ENCODE measurements at regions of chr16 and their contacts with region 1.

Region 1: GRCh38 chr16:54286090-54286993 is at the start of gene IRX3:
- DNase-seq: peak; percentile 43 to 69 (median 64)
- ATAC-seq: peak; percentile 57 to 65 (median 61)
- H3K4me3 ChIP-seq: peak within 1 kb of the TSS; percentile 21 to 56 (median 38)
- H3K27ac ChIP-seq: peak within 1 kb of the TSS; percentile 22 to 61 (median 56)
- H3K4me1 ChIP-seq: peaks cover 0 to 3% (median 0%) of the 10 kb centered on the region in 3 donors
- H3K27me3 ChIP-seq: peaks cover 0 to 54% (median 2%) of the 10 kb centered on the region in 4 donors
- CTCF ChIP-seq: no peak
- total RNA-seq, gene IRX3: 1.6 to 4.0 (median 2.0) TPM

Region 2: DNA sequence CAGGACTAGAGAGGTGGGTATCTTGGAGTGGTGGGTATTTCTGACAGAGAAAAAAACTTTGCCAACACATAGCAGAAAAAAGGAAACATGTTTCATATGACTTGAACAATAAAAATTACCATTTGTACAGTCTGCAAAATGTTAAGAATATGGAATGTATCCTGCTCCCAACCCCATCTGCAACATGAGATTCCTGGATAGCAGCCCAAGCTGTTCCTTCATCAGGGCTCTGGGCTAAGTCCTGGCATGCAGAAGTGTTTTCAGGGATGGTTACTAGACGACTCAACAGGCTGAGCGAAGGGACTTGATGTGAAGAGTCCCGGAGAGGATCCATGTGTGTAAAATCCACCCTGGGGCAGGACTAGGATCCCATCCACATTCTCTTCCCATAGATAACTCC is 121.3 kb after region 1 on chr16:
- intact Hi-C with region 1: no loop called
- DNase-seq: no peak
- ATAC-seq: no peak
- H3K4me3 ChIP-seq: no peak overlapping the region
- H3K27ac ChIP-seq: no peak overlapping the region
- H3K4me1 ChIP-seq: no peaks in the 10 kb centered on the region
- H3K27me3 ChIP-seq: no peaks in the 10 kb centered on the region
- CTCF ChIP-seq: no peak

Region 3: DNA sequence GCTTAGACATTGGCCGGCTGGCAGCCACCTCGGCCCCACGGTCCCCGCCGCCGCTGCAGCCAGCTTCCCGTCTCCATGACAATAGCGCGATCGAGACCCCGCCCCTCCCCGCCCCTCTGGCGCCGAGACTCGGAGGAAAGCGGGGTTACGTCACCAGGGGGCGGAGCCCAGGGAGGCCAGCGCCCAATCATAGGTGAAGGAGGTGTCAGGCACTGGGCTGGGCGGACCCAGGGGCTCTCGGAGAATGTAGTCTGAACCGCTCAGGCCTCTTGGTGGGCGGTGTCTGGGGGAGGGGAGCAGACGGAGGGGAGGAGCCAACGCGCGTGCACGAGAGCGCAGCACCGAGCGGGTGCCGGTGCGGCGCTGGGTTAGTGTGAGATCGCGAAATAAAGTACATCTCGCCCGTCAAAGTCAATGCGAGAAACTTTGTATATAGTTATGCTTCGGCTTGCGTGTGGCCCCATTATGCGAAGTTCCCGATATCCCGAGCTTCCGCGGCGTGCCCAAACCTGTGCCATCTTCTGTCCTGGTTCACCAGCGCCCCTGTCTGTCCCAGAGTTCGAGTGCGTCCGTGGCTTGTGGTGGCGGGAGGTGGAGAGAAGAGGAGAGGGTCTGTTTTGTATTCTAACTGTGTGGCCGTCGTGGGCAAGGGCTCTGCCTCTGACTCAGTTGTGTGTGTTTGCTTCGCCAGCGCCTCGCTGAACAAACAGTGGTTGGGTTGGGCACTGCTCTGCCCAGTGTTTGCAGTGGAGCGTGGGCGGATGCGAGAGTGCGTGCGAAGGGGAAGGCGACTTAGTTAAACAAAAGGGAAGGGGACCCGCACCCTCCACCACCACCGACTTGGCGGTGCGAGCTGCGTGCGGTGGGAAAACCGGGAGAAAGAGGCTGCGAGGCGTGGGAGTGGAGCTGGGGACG is 643.0 kb after region 1 on chr16:
- intact Hi-C with region 1: loop called in 1 of 3 experiments (anchors 10 kb)
- DNase-seq: peak; percentile 98 to 100 (median 100)
- ATAC-seq: peak; percentile 89 to 95 (median 90)
- H3K4me3 ChIP-seq: peak overlapping the region; percentile 31 to 64 (median 48)
- H3K27ac ChIP-seq: peak overlapping the region in 2 of 4 donors; percentile 39
- H3K4me1 ChIP-seq: peaks cover 0 to 9% (median 0%) of the 10 kb centered on the region in 3 donors
- H3K27me3 ChIP-seq: peaks cover 0 to 57% (median 29%) of the 10 kb centered on the region in 4 donors
- CTCF ChIP-seq: no peak

Region 4: DNA sequence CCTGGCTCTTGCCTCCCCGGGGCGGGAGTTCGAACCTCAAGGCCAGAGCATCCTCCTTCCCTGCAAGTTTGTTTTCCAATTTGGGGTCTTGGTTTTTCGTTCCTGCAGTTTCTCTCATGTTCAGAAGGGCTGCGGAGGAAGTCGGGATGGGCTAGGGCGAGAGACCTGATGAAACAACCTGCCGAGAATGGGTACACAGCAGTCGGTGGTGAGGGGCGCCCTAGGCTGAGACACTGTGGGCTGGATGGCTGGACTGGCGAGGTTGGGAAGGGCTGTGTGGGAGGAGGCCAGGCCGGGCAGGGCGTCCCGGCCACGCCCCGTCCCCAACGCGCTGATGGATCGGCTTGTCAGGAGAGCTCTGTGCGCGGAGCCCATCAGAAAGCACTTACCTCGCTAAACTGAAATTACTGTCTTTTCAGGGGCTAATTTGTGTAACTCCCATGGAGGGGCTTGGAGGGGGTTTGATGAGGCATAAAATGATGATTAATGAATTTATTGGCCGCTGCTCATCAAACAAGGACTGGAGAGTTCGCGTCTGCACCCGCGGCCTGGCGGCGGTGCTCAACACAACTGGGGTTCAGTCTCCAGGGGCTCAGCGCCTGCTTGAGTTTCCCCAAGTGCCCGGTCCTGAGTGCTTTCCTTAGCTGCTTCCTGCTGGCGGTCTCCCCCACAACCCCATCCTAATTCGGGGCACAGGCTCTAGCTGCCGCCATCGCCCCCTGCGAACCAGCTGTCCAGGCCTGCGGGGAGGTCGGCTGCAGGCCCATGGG is 653.4 kb after region 1 on chr16:
- intact Hi-C with region 1: loop called in 2 of 3 experiments (anchors 10 kb)
- DNase-seq: no peak
- ATAC-seq: no peak
- H3K4me3 ChIP-seq: no peak overlapping the region
- H3K27ac ChIP-seq: no peak overlapping the region
- H3K4me1 ChIP-seq: peaks cover 0 to 18% (median 10%) of the 10 kb centered on the region in 3 donors
- H3K27me3 ChIP-seq: peaks cover 8 to 63% (median 30%) of the 10 kb centered on the region in 4 donors
- CTCF ChIP-seq: no peak